Activated T-helper 2 cell treated with anti-CD3 and anti-CD28 coated beads, Interferon-gamma antibody, Interleukin-2, Interleukin-4, amounts not matched to agents 10 μg/mL and 5 μg/mL and 100 μg/mL, durations not matched to agents 14 hours and 24 hours and 36 hours (primary cell): ENCODE measurements at regions of chr6 and their contacts with region 1.

Region 1: DNA sequence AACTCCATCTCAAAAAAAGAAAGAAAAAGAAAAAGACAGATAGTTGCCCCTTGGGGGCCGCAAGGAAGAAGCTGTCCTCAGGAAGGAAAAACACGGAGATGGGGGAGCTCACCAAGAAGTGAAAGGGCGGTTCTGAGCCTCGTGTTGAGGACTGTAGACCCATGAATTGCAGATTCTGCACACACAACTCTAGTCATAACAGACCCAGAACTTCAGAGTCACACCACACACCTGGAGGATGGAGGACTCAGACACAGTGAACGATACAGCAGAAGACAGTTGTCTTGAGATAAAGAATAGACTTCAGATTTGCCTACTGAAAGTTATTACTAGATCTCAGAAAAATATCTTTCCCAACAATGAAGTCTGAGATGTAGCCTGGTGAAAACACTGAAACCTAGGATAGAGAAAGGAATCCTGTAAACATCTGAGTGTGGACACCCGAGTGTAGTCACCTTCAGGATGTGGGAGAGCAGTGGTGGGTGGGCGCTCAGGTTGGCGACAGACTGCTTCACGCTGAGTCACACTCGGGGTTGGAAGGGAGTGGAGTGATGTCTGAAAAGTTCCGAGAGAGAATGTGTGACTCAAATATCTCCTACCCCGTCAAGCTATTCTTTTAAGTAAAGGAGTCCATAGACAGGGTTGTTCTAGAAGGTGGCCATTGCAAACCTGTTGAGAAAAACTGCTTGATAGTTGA is 88.1 kb downstream of the MAP3K4 start:
- DNase-seq: no peak
- H3K4me3 Mint-ChIP-seq: no peak overlapping the region
- H3K27ac Mint-ChIP-seq: peak overlapping the region; percentile 68
- H3K4me1 Mint-ChIP-seq: peaks cover 4% of the 10 kb centered on the region
- H3K27me3 Mint-ChIP-seq: no peaks in the 10 kb centered on the region

Region 2: DNA sequence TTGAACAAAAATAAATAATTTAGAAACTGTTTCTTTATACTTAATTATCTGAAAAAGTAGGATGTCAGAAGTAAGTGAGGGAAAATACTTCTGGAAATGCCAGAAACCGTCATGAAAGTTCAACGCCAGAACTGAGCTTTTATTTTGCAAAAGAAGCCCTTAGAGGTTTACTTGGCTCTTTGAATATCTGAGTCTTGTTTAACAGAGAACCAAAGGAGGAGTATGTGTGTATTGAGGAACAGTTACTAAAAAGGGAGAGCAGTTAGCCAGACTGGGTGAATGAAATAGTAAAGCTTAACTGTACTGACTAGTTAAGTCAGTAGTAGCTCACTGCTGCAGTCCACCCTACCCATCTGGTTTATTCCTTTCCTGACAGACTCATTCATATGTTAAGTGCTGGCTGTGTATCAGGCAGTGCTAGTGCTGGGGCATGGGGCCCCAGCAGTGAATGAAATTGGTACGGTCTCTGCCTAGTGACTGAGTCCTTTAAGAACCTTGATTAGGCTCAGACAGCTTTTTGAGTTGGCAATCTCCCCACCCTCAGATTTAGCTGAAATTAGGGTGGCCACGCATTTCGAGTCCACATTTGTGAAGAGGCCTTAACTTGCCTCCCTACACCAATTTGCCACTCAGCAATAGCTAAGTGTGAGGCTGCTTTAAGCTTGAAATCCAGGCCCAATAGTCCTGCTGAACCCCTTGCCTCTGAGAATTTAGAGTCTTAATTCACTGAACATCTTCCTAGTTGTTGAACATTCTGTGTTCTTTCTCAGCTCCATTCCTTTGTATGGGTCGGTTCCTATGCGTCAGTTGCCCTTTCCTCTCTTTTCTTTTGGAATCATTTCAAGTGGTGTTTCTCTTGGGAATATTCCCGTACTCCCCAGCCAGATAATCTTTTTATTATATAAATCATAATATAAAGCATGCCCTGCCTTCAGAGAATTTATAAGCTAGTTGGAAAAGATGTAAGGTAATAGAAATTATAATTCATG is 67.9 kb before region 1 on chr6:
- intact Hi-C with region 1: no loop called
- DNase-seq: no peak
- H3K4me3 Mint-ChIP-seq: no peak overlapping the region
- H3K27ac Mint-ChIP-seq: no peak overlapping the region
- H3K4me1 Mint-ChIP-seq: no peaks in the 10 kb centered on the region
- H3K27me3 Mint-ChIP-seq: no peaks in the 10 kb centered on the region

Region 3: GRCh38 chr6:161038229-161039031 is 41.3 kb before region 1 on chr6:
- intact Hi-C with region 1: loop called (anchors 5 kb)
- DNase-seq: no peak
- H3K4me3 Mint-ChIP-seq: no peak overlapping the region
- H3K27ac Mint-ChIP-seq: no peak overlapping the region
- H3K4me1 Mint-ChIP-seq: peaks cover 16% of the 10 kb centered on the region
- H3K27me3 Mint-ChIP-seq: no peaks in the 10 kb centered on the region

Region 4: DNA sequence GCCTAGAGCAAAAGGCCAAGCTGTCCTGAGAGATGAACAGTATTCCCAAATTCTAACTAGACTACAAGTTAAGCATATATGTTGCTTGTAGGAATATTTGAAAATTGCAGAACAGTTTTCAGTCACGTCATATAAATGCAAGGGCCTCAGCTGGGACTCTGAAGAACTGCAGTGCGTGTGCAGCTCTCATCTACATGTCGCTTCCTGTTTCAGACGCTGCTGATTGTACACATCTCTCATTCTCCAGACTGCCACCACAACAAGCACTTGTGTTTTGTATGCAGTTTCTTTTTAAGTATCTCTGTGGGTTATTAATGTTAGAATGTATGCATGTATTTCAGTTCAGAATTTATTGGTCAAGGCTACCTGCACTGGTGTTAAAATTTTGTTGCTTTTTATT is 31.5 kb after region 1 on chr6:
- intact Hi-C with region 1: no loop called
- DNase-seq: no peak
- H3K4me3 Mint-ChIP-seq: no peak overlapping the region
- H3K27ac Mint-ChIP-seq: peak overlapping the region; percentile 82
- H3K4me1 Mint-ChIP-seq: peaks cover 33% of the 10 kb centered on the region
- H3K27me3 Mint-ChIP-seq: no peaks in the 10 kb centered on the region

Region 5: GRCh38 chr6:162727309-162728182 is 1647.8 kb after region 1 on chr6 and contains the starts of genes PACRG and PRKN:
- intact Hi-C with region 1: loop called (anchors 10 kb)
- DNase-seq: peak; percentile 95
- H3K4me3 Mint-ChIP-seq: peak within 1 kb of the TSS; percentile 88
- H3K27ac Mint-ChIP-seq: peak within 1 kb of the TSS; percentile 84
- H3K4me1 Mint-ChIP-seq: peaks cover 11% of the 10 kb centered on the region
- H3K27me3 Mint-ChIP-seq: no peaks in the 10 kb centered on the region
- total RNA-seq, gene PACRG: not detected in 2 replicates
- total RNA-seq, gene PRKN: 0.51 TPM in 1 of 2 replicates, not detected in the other